Activated CD8-positive, alpha-beta T cell treated with anti-CD3 and anti-CD28 coated beads, Interleukin-2, amount 10 ng/mL, durations not matched to agents 7 days and 5 days (primary cell): ENCODE measurements at regions of chr3 and their contacts with region 1.

Region 1: DNA sequence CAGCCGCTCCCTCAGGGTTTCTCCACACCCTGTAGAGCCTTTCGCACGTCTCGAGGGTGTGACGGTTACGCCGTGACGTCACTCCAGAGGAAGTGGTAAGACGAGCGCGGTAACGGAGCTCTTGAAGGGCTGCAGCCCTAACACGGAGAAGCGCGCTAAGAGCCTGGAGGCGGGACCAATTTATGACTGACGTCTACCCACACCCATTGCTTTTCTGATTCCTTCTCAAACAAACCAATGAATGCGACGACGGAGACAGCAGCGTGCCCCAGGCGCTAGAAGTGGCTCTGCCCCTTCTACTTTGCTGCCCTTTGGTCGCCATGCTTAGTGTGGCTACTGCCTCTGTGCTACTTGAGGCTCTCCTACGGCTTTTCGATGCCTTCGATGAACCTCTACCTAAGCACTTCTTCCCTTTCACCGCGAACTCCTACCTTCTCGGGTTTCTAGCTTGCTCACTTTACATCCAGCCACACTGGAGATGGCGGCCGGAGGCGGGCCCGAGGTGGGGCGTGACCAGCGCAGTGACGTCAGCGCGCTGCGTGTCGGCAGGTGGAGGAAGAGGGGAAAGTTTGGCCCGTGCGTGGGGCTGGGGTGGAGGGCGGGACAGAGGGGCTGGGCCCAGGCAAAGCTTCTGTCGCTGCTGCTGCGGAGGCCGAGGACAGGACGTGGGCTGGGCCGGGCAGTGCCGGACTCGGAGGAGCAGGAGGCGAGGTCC is at the start of gene OXSR1:
- DNase-seq: peak; percentile 99
- ATAC-seq: peak; percentile 93
- H3K4me3 Mint-ChIP-seq: peak within 1 kb of the TSS; percentile 86
- H3K27ac Mint-ChIP-seq: peak within 1 kb of the TSS; percentile 100
- H3K4me1 Mint-ChIP-seq: peaks cover 46% of the 10 kb centered on the region
- H3K27me3 Mint-ChIP-seq: no peaks in the 10 kb centered on the region
- total RNA-seq, gene OXSR1: 56.9 to 60.3 TPM

Region 2: DNA sequence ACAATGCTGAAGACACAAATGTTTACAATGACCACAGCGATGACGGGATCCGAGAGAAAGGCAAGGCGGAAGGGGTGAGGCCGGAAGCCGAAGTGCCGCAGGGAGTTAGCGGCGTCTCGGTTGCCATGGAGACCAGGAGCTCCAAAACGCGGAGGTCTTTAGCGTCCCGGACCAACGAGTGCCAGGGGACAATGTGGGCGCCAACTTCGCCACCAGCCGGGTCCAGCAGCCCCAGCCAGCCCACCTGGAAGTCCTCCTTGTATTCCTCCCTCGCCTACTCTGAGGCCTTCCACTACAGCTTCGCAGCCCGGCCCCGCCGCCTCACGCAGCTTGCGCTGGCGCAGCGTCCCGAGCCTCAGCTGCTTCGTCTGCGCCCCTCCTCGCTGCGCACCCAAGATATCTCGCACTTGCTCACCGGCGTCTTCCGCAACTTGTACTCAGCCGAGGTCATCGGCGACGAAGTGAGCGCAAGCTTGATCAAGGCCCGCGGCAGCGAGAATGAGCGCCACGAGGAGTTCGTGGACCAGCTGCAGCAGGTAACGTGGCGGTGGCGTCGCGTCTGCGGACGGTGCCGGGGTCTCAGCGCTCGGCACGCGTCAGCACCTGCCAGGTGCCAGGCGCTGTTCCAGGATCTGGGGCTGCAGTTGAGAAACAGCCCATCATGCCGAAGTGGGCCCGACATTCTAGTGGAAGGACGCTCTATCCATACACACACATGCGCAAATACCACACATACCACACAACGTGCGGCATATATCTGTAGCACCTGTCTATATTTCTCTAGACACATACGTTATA is 125.8 kb before region 1 on chr3 and contains the start of gene DLEC1:
- CTCF ChIA-PET with region 1: no interaction called
- POLR2A ChIA-PET with region 1: interaction called, 13 read pairs
- DNase-seq: peak; percentile 95
- ATAC-seq: peak; percentile 78
- H3K4me3 Mint-ChIP-seq: peak within 1 kb of the TSS; percentile 80
- H3K27ac Mint-ChIP-seq: peak within 1 kb of the TSS; percentile 96
- H3K4me1 Mint-ChIP-seq: peaks cover 38% of the 10 kb centered on the region
- H3K27me3 Mint-ChIP-seq: peaks cover 8% of the 10 kb centered on the region
- total RNA-seq, gene DLEC1: 0.26 to 0.60 TPM

Region 3: DNA sequence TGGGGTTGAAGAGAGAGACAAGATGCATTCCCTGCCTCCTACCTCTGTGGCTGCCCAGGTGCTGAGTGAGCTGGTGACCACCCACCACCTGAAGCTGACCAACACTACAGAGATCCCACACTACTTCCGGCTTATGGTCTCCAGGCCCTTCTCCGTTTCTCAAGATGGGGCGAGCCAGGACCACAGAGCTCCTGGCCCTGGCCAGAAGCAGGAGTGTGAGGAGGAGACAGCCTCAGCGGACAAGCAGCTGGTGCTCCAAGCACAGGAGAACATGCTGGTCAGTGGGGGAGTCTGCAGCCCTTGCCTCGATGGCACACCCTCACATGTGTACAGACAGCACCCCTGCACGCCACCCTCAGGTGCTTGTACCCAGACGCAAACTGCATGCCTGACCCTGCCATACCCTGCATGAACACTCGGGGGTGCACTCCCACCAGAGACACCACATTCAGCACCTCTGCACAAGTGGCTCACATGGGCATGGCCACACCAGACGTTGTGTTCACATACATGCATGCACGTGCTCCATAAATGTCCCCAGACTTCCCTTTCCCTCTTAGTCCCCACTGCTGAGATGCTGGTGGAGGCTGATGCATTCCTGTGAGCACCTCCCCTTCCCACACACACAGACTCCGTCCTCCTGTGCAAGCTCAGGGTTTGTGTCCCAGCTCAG is 47.2 kb before region 1 on chr3:
- CTCF ChIA-PET with region 1: interaction called, 14 read pairs
- POLR2A ChIA-PET with region 1: no interaction called
- DNase-seq: peak; percentile 84
- ATAC-seq: peak; percentile 81
- H3K4me3 Mint-ChIP-seq: no peak overlapping the region
- H3K27ac Mint-ChIP-seq: peak overlapping the region; percentile 19
- H3K4me1 Mint-ChIP-seq: peaks cover 5% of the 10 kb centered on the region
- H3K27me3 Mint-ChIP-seq: no peaks in the 10 kb centered on the region

Region 4: GRCh38 chr3:38136777-38137614 is 28.1 kb before region 1 on chr3 and contains the start of gene ACAA1:
- CTCF ChIA-PET with region 1: interaction called, 30 read pairs
- POLR2A ChIA-PET with region 1: interaction called, 153 read pairs
- DNase-seq: peak; percentile 100
- ATAC-seq: peak; percentile 89
- H3K4me3 Mint-ChIP-seq: peak within 1 kb of the TSS; percentile 86
- H3K27ac Mint-ChIP-seq: peak within 1 kb of the TSS; percentile 96
- H3K4me1 Mint-ChIP-seq: peaks cover 69% of the 10 kb centered on the region
- H3K27me3 Mint-ChIP-seq: no peaks in the 10 kb centered on the region
- total RNA-seq, gene ACAA1: 99.7 to 104 TPM

Region 5: DNA sequence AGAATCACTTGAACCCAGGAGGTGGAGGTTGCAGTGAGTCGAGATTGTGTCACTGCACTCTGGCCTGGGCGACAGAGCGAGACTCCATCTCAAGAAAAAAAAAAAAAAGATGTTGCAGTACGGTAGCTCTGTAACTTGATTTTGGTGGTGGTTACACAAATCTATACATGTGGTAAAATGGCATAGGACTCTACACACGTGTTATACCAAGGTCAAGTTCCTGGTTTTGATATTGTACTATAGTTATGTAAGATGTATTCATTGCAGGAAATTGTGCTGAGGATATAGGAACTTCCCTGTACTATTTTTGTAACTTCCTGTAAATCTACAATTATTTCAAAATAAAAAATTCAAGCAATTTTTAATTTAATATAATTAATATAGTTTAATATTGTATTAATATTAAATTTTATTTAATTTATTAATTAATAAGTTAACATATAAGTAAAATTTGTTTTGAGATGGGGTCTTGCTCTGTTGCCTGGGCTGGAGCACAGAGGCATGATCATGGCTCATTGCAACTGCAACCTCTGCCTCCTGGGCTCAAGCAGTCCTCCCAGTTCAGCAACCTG is 16.7 kb before region 1 on chr3:
- CTCF ChIA-PET with region 1: interaction called, 50 read pairs
- POLR2A ChIA-PET with region 1: interaction called, 57 read pairs
- DNase-seq: peak; percentile 11
- ATAC-seq: no peak
- H3K4me3 Mint-ChIP-seq: no peak overlapping the region
- H3K27ac Mint-ChIP-seq: no peak overlapping the region
- H3K4me1 Mint-ChIP-seq: peaks cover 28% of the 10 kb centered on the region
- H3K27me3 Mint-ChIP-seq: no peaks in the 10 kb centered on the region

Region 6: GRCh38 chr3:38154033-38154494 is 11.1 kb before region 1 on chr3:
- CTCF ChIA-PET with region 1: interaction called, 50 read pairs
- POLR2A ChIA-PET with region 1: interaction called, 57 read pairs
- DNase-seq: no peak
- ATAC-seq: no peak
- H3K4me3 Mint-ChIP-seq: no peak overlapping the region
- H3K27ac Mint-ChIP-seq: no peak overlapping the region
- H3K4me1 Mint-ChIP-seq: peaks cover 42% of the 10 kb centered on the region
- H3K27me3 Mint-ChIP-seq: no peaks in the 10 kb centered on the region

Region 7: GRCh38 chr3:38268526-38268925 is 103.4 kb after region 1 on chr3:
- CTCF ChIA-PET with region 1: no interaction called
- POLR2A ChIA-PET with region 1: no interaction called
- DNase-seq: no peak
- ATAC-seq: no peak
- H3K4me3 Mint-ChIP-seq: no peak overlapping the region
- H3K27ac Mint-ChIP-seq: no peak overlapping the region
- H3K4me1 Mint-ChIP-seq: peaks cover 18% of the 10 kb centered on the region
- H3K27me3 Mint-ChIP-seq: no peaks in the 10 kb centered on the region

Region 8: GRCh38 chr3:38374221-38374620 is 209.1 kb after region 1 on chr3:
- CTCF ChIA-PET with region 1: no interaction called
- POLR2A ChIA-PET with region 1: no interaction called
- DNase-seq: peak; percentile 58
- ATAC-seq: peak; percentile 78
- H3K4me3 Mint-ChIP-seq: no peak overlapping the region
- H3K27ac Mint-ChIP-seq: peak overlapping the region; percentile 19
- H3K4me1 Mint-ChIP-seq: peaks cover 30% of the 10 kb centered on the region
- H3K27me3 Mint-ChIP-seq: peaks cover 3% of the 10 kb centered on the region

Region 9: GRCh38 chr3:38490281-38491030 is 325.3 kb after region 1 on chr3:
- CTCF ChIA-PET with region 1: no interaction called
- POLR2A ChIA-PET with region 1: no interaction called
- DNase-seq: no peak
- ATAC-seq: no peak
- H3K4me3 Mint-ChIP-seq: no peak overlapping the region
- H3K27ac Mint-ChIP-seq: no peak overlapping the region
- H3K4me1 Mint-ChIP-seq: peaks cover 8% of the 10 kb centered on the region
- H3K27me3 Mint-ChIP-seq: no peaks in the 10 kb centered on the region